Endothelial cell of umbilical vein (primary cell): ENCODE measurements at regions of chr5 and their contacts with region 1.

Region 1: GRCh38 chr5:147453875-147454814 is 55.7 kb downstream of the DPYSL3 start:
- DNase-seq: peak; percentile 92
- H3K4me3 ChIP-seq: peak overlapping the region; percentile 43 to 88 (median 55)
- H3K27ac ChIP-seq: peak overlapping the region; percentile 37
- H3K4me1 ChIP-seq: peaks cover 4% of the 10 kb centered on the region
- H3K27me3 ChIP-seq: no peaks in the 10 kb centered on the region
- CTCF ChIP-seq: peak; percentile 90 to 95
- POLR2A ChIP-seq: no peak

Region 2: DNA sequence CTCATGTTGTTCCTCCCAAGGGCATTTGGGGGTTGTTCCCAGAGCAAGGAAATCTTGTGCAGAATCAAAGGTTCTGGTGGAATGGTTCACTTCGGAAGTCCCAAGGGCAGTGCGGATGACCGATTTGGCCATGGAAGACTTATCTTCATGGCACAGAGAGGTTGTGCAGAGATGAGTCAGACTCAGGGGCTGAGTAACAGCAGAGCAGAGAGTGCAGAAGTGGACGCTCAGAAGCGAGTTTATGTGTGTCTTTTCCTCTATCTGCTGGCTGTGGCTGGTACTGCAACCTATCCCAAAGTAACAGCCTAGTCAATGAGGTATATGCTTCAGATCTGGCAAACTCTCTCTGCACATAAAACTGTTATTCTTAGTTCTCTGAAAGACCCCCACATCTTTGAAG is 62.4 kb before region 1 on chr5:
- CTCF ChIA-PET with region 1: interaction called, 9 read pairs
- POLR2A ChIA-PET with region 1: interaction called, 3 read pairs
- dilution Hi-C with region 1: no loop called
- intact Hi-C with region 1: loop called (anchors 2 kb)
- DNase-seq: peak; percentile 80
- H3K4me3 ChIP-seq: no peak overlapping the region
- H3K27ac ChIP-seq: no peak overlapping the region
- H3K4me1 ChIP-seq: peaks cover 12% of the 10 kb centered on the region
- H3K27me3 ChIP-seq: no peaks in the 10 kb centered on the region
- CTCF ChIP-seq: peak; percentile 63 to 73
- POLR2A ChIP-seq: no peak

Region 3: GRCh38 chr5:147434049-147434448 is 20.1 kb before region 1 on chr5:
- CTCF ChIA-PET with region 1: no interaction called
- POLR2A ChIA-PET with region 1: no interaction called
- dilution Hi-C with region 1: no loop called
- intact Hi-C with region 1: no loop called
- DNase-seq: no peak
- H3K4me3 ChIP-seq: no peak overlapping the region
- H3K27ac ChIP-seq: no peak overlapping the region
- H3K4me1 ChIP-seq: no peaks in the 10 kb centered on the region
- H3K27me3 ChIP-seq: no peaks in the 10 kb centered on the region
- CTCF ChIP-seq: no peak
- POLR2A ChIP-seq: no peak

Region 4: GRCh38 chr5:147464211-147464610 is 10.1 kb after region 1 on chr5:
- CTCF ChIA-PET with region 1: interaction called, 33 read pairs
- POLR2A ChIA-PET with region 1: no interaction called
- dilution Hi-C with region 1: no loop called
- intact Hi-C with region 1: loop called (anchors 1 kb)
- DNase-seq: peak; percentile 81
- H3K4me3 ChIP-seq: no peak overlapping the region
- H3K27ac ChIP-seq: no peak overlapping the region
- H3K4me1 ChIP-seq: peaks cover 10% of the 10 kb centered on the region
- H3K27me3 ChIP-seq: no peaks in the 10 kb centered on the region
- CTCF ChIP-seq: peak; percentile 55 to 61
- POLR2A ChIP-seq: no peak

Region 5: DNA sequence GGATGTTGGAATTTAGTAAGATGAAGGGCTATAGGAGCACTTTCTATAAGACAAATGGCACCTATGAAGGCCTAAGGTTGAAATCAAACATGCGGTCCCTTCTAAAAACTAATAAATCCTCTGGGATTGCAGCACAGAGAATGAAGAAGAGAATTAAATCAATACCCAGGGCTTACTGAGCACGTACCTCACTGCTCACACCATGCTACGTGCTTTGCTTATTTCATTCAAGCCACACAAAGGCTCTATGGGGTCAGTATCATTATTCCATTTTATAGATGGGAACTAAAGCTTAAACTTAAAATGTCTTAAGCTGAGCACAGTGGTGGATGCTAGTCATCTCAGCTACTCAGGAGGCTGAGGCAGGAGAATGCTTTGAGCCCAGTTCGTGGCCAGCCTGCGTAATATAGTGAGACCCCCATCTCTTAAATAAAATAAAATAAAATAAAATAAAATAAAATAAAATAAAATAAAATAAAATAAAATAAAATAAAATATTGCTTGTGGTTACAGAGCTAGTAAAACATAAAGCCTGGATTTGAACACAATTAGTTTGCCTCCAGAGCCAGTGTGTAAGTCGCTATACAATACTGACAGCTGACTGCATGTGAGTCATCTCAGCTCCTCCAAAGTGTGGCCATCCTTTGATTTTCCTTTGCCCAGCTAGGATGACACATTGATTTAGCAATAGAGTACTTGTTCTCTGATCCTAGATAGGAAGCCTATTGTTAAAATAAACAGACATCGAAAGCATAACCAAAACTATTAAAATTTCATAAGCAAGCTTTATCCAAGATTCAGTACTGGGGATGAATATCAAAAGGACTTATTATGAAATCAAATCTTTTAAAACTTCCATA is 76.6 kb after region 1 on chr5:
- CTCF ChIA-PET with region 1: interaction called, 11 read pairs
- POLR2A ChIA-PET with region 1: no interaction called
- dilution Hi-C with region 1: no loop called
- intact Hi-C with region 1: loop called (anchors 1 kb)
- DNase-seq: peak; percentile 85
- H3K4me3 ChIP-seq: peak overlapping the region in 1 of 3 experiments; percentile 22
- H3K27ac ChIP-seq: peak overlapping the region; percentile 69
- H3K4me1 ChIP-seq: peaks cover 33% of the 10 kb centered on the region
- H3K27me3 ChIP-seq: no peaks in the 10 kb centered on the region
- CTCF ChIP-seq: no peak
- POLR2A ChIP-seq: no peak